PC-9 (cell line): ENCODE measurements at regions of chr15 and their contacts with region 1.

Region 1: DNA sequence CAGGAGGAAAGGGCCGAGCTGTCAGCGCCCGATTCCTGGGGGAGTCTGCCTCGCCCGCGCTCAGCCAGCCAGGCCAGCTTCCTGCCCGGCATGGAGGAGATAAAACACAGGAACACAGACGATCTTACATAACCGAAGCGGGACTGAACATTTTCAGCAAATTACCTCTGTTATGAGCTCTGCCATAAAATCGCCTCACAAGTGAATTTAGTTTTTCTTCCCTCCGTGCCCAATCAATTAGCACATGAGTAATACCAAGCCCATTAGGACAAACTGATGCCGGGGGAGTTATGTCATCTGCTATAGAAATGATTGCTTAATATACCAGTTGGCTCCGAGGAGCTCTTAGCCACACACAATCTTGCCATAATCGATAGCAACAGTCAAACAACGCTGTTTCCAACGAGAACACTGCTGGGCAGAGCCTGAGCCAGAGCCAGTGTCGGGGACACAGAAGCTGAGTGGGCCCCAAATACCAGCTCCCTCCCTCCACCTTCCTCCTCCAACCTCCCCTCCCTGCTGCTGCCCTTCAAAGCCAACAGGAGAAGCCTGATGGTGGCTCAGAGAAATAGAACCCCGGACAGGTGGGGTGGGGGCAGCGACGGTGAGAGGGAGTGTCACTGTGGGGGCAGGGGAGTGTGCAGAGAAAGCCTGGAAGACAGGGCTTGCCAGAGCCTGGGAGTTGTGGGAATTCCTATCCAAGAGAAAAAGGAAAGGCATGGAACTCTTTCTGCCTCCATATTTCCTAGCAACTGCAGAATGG is 279.4 kb upstream of the TLE3 start:
- DNase-seq: no peak
- H3K4me3 ChIP-seq: no peak overlapping the region
- H3K27ac ChIP-seq: no peak overlapping the region
- H3K4me1 ChIP-seq: peaks cover 30% of the 10 kb centered on the region
- H3K27me3 ChIP-seq: no peaks in the 10 kb centered on the region
- CTCF ChIP-seq: no peak

Region 2: DNA sequence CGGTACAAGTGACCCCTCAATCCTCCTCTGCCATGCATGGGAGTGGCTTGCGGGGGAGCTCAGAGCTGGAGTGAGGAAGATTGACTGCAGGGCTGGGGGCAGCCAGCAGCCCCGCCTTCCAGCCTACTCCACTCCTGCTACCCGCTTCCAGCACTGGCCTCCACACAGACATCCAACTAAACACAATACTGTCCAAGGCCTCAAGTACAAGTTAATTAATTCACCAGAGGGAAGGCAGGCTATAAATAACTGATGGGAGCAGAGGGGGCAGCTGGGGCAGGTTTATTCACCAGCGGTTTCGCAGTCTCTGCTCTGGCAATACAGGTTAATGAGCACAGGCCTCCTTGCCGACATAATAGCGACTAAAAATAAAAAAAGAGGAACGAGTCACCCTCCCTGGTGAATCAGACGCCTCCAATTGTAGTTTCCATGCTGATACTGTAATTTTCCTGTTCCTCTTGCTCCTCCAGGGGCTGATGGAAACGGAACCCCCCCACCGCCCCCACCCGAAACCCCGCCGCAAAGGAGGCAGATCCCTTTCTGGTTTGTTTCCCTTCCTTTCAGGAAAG is 113.0 kb before region 1 on chr15:
- CTCF ChIA-PET with region 1: no interaction called
- POLR2A ChIA-PET with region 1: no interaction called
- intact Hi-C with region 1: no loop called
- DNase-seq: peak in 1 of 2 experiments; percentile 49
- H3K4me3 ChIP-seq: no peak overlapping the region
- H3K27ac ChIP-seq: no peak overlapping the region
- H3K4me1 ChIP-seq: peaks cover 43% of the 10 kb centered on the region
- H3K27me3 ChIP-seq: no peaks in the 10 kb centered on the region
- CTCF ChIP-seq: no peak

Region 3: DNA sequence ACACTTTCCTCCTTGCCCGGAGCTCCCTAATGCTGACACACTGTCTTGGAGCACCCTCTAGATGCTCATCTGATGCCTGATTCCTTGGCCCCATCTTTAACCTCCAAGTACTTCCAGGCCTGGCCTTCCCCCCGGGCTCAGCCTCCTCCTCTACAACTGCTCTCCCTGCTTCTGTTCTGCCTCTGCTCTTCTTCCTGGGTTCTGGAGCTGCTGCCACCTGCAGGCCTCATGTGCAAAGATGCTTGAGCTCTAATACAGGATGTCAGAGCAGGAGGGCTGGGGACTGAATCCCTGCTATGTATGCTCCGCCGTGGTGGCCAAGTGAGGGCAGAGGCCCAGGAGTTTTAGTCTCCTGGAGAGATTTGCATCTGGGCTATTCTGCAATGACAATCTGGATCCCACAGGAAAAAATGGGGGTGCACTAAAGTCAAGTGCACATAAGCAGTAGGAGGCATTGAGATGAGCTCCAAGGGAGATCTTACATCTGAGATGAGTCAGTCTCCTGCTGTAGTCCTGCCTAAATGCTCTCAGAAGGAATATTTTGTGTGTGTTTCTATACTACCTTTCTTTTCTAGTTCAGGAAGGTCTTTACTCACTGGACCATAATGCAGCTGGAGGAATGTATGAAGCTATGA is 89.9 kb after region 1 on chr15:
- CTCF ChIA-PET with region 1: no interaction called
- POLR2A ChIA-PET with region 1: no interaction called
- intact Hi-C with region 1: loop called (anchors 5 kb)
- DNase-seq: peak; percentile 42 to 49
- H3K4me3 ChIP-seq: no peak overlapping the region
- H3K27ac ChIP-seq: no peak overlapping the region
- H3K4me1 ChIP-seq: peaks cover 63% of the 10 kb centered on the region
- H3K27me3 ChIP-seq: no peaks in the 10 kb centered on the region
- CTCF ChIP-seq: peak; percentile 70